SK-N-SH (cell line): ENCODE measurements at regions of chr13 and their contacts with region 1.

Region 1: DNA sequence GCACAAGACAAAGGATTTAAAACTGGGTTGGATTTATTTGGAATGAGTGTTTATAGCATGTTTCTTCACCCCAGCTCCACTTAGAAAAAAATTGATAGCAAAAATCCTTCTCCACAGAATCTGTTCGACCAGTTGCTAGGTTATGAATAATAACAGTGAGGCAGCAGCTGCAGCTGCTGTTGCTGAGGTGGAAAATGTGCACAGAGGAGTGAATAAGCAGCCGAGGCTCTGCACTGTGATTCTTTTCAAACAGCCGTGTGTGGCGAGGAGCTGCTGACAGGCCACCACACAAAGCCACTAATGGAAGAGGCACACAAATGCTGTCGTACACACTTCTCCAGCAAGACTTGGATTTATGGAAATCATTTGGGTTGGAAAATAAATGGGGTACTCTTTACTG is 6.4 kb upstream of the RASL11A start:
- DNase-seq: peak; percentile 30
- H3K4me3 ChIP-seq: no peak overlapping the region
- H3K27ac ChIP-seq: peak overlapping the region; percentile 47 to 67
- H3K4me1 ChIP-seq: peaks cover 5 to 14% of the 10 kb centered on the region in 2 experiments; a peak in 2 of 4 replicates
- H3K27me3 ChIP-seq: no peaks in the 10 kb centered on the region
- CTCF ChIP-seq: no peak
- EP300 ChIP-seq: no peak
- RAD21 ChIP-seq: no peak

Region 2: GRCh38 chr13:27251166-27252091 is 12.8 kb before region 1 on chr13 and contains the start of gene RPL21:
- CTCF ChIA-PET with region 1: interaction called, 8 read pairs
- POLR2A ChIA-PET with region 1: interaction called, 11 read pairs
- DNase-seq: peak; percentile 87
- H3K4me3 ChIP-seq: peak within 1 kb of the TSS; percentile 76 to 98
- H3K27ac ChIP-seq: peak within 1 kb of the TSS; percentile 91 to 96
- H3K4me1 ChIP-seq: peaks cover 0 to 10% of the 10 kb centered on the region in 2 experiments; a peak in 1 of 4 replicates
- H3K27me3 ChIP-seq: no peaks in the 10 kb centered on the region
- CTCF ChIP-seq: no peak
- EP300 ChIP-seq: no peak
- RAD21 ChIP-seq: no peak
- polyA plus RNA-seq, gene RPL21: 1,261 and 1,610 TPM in 2 replicates